Heart right ventricle (tissue), 16 donors: ENCODE measurements at regions of chr3 and their contacts with region 1.

Region 1: GRCh38 chr3:172367205-172368105 is 80.8 kb downstream of the GHSR start:
- DNase-seq: no peak
- ATAC-seq: peak in 1 of 8 donors; percentile 9
- H3K4me3 ChIP-seq: no peak overlapping the region
- H3K27ac ChIP-seq: peak overlapping the region in 4 of 10 donors; percentile 6 to 24 (median 12)
- H3K4me1 ChIP-seq: peaks cover 0 to 28% (median 10%) of the 10 kb centered on the region in 9 donors
- H3K27me3 ChIP-seq: no peaks in the 10 kb centered on the region
- CTCF ChIP-seq: no peak

Region 2: GRCh38 chr3:172106989-172107388 is 260.5 kb before region 1 on chr3:
- intact Hi-C with region 1: no loop called
- DNase-seq: no peak
- ATAC-seq: peak in 3 of 8 donors; percentile 23 to 49 (median 33)
- H3K4me3 ChIP-seq: no peak overlapping the region
- H3K27ac ChIP-seq: peak overlapping the region in 5 of 10 donors; percentile 5 to 67 (median 18)
- H3K4me1 ChIP-seq: peaks cover 3 to 83% (median 70%) of the 10 kb centered on the region in 9 donors
- H3K27me3 ChIP-seq: no peaks in the 10 kb centered on the region
- CTCF ChIP-seq: no peak

Region 3: GRCh38 chr3:172461530-172462138 is 94.2 kb after region 1 on chr3:
- intact Hi-C with region 1: loop called in 1 of 10 experiments (anchors 10 kb)
- DNase-seq: no peak
- ATAC-seq: no peak
- H3K4me3 ChIP-seq: no peak overlapping the region
- H3K27ac ChIP-seq: no peak overlapping the region
- H3K4me1 ChIP-seq: peaks cover 0 to 7% (median 0%) of the 10 kb centered on the region in 9 donors
- H3K27me3 ChIP-seq: peaks cover 0 to 5% (median 0%) of the 10 kb centered on the region in 7 donors
- CTCF ChIP-seq: peak; percentile 66 to 92 (median 83)

Region 4: DNA sequence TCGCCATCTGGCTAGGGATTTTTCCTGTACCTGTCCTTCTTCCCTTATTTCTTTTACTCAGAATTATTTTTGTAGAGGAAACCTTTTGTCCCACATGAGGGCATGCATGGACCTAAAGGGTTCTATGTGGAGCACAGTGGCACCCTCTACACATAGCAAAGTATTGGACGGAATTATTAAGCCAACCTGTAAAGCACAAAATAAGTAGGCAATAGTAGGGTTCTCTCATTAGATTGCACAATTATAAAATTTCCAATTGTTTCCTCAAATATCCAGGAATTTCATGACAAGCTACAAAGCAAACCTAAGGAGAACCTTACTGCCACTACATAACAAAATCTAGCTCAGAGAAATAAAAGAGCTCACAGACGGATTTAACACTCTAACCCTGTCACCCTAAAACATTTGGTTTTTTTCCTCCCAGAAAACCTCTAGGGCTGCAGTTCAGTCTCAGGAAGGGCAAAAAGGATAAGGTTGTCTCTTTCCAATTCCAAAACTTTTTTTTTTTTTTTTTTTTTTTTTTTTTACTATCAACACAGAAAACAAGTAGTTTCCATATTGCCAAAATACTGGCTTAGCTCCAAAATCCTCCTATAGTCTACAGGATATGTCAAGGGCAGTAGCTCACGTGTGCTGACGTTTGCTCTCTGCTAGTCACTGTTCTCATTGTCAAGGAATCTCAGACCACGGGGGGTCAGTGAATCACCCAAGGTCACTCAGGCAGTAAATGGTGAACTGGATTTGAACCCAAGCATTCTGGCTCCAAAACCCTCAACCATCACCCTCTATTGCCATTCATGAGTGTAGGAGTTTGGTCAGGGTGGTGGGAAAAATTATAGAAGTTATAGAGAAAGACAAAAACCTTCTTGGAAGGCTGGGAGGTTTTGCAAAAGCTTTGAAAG is 291.1 kb after region 1 on chr3:
- intact Hi-C with region 1: loop called in 2 of 10 experiments (anchors 10 kb)
- DNase-seq: no peak
- ATAC-seq: peak; percentile 46 to 89 (median 78)
- H3K4me3 ChIP-seq: no peak overlapping the region
- H3K27ac ChIP-seq: peak overlapping the region in 6 of 10 donors; percentile 22 to 54 (median 34)
- H3K4me1 ChIP-seq: peaks cover 0 to 26% (median 20%) of the 10 kb centered on the region in 9 donors
- H3K27me3 ChIP-seq: no peaks in the 10 kb centered on the region
- CTCF ChIP-seq: no peak